AG04450 (cell line): ENCODE measurements at regions of chr2 and their contacts with region 1.

Region 1: DNA sequence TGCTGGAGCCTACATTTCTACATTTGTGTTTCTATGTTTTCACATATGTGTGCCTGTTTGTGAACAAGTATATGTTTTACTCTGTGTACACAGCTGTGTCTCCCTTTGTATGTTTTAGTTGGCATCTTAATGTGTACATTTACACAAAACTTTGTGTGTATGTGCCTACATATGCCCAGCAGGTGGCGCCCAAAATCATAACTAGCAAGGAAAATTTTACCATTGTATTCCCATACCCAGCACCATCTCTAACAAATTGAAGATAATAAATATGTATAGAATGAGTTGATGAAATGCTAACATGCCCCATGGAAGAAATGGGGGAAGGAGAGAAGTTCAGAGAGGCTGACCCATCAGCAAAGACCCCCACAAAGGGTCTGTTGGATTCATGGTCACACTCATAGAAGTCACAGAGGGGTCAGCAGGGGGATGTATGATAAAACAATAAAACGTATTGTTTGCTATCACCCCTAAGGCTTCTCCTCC is 48.1 kb downstream of the PKDCC start:
- DNase-seq: peak; percentile 61
- H3K4me3 ChIP-seq: no peak overlapping the region
- H3K27ac ChIP-seq: no peak overlapping the region
- H3K27me3 ChIP-seq: no peaks in the 10 kb centered on the region
- CTCF ChIP-seq: peak; percentile 75

Region 2: GRCh38 chr2:41881249-41881648 is 214.7 kb before region 1 on chr2:
- CTCF ChIA-PET with region 1: no interaction called
- POLR2A ChIA-PET with region 1: no interaction called
- DNase-seq: no peak
- H3K4me3 ChIP-seq: no peak overlapping the region
- H3K27ac ChIP-seq: no peak overlapping the region
- H3K27me3 ChIP-seq: peaks cover 4% of the 10 kb centered on the region
- CTCF ChIP-seq: no peak

Region 3: GRCh38 chr2:41966431-41966893 is 129.5 kb before region 1 on chr2:
- CTCF ChIA-PET with region 1: interaction called, 11 read pairs
- POLR2A ChIA-PET with region 1: no interaction called
- DNase-seq: peak; percentile 82
- H3K4me3 ChIP-seq: no peak overlapping the region
- H3K27ac ChIP-seq: peak overlapping the region; percentile 49
- H3K27me3 ChIP-seq: peaks cover 4% of the 10 kb centered on the region
- CTCF ChIP-seq: no peak

Region 4: GRCh38 chr2:42141687-42142546 is 46.0 kb after region 1 on chr2:
- CTCF ChIA-PET with region 1: interaction called, 13 read pairs
- POLR2A ChIA-PET with region 1: no interaction called
- DNase-seq: peak; percentile 77
- H3K4me3 ChIP-seq: peak overlapping the region; percentile 47
- H3K27ac ChIP-seq: peak overlapping the region; percentile 98
- H3K27me3 ChIP-seq: no peaks in the 10 kb centered on the region
- CTCF ChIP-seq: no peak

Region 5: DNA sequence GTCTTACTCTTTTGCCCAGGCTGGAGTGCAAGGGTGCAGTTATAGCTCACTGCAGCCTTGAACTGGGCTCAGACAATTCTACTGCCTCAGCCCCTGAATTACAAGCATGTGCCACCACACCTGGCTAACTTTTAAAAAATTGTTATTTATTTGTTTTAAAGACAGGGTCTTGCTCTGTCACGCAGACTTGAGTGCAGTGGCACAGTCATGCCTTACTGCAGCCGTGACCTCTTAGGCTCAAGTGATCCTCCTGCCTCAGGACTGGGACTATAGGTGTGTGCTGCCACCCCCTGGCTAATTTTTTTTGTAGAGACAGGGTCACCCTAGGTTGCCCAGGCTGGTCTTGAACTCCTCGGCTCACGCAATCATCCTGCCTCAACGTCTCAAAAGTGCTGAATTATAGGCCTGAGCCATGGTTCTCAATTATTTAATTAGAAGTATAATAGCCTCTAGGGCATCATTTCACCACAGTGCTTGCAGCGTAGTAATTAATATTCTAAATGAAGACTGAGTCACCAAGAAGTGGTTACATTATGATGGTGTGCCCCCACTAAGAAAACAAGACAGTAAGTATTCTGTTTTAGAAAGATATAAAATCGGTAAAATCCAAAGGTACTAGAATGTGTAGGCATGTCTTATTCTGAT is 142.8 kb after region 1 on chr2:
- CTCF ChIA-PET with region 1: interaction called, 22 read pairs
- POLR2A ChIA-PET with region 1: no interaction called
- DNase-seq: no peak
- H3K4me3 ChIP-seq: no peak overlapping the region
- H3K27ac ChIP-seq: no peak overlapping the region
- H3K27me3 ChIP-seq: no peaks in the 10 kb centered on the region
- CTCF ChIP-seq: no peak

Region 6: GRCh38 chr2:42328148-42328833 is 232.3 kb after region 1 on chr2:
- CTCF ChIA-PET with region 1: interaction called, 105 read pairs
- POLR2A ChIA-PET with region 1: no interaction called
- DNase-seq: no peak
- H3K4me3 ChIP-seq: no peak overlapping the region
- H3K27ac ChIP-seq: no peak overlapping the region
- H3K27me3 ChIP-seq: no peaks in the 10 kb centered on the region
- CTCF ChIP-seq: peak; percentile 54

Region 7: GRCh38 chr2:42901076-42901640 is 805.2 kb after region 1 on chr2:
- CTCF ChIA-PET with region 1: no interaction called
- POLR2A ChIA-PET with region 1: no interaction called
- DNase-seq: peak; percentile 20
- H3K4me3 ChIP-seq: no peak overlapping the region
- H3K27ac ChIP-seq: no peak overlapping the region
- H3K27me3 ChIP-seq: no peaks in the 10 kb centered on the region
- CTCF ChIP-seq: no peak